Endothelial cell of umbilical vein (primary cell): ENCODE measurements at regions of chr14 and their contacts with region 1.

Region 1: GRCh38 chr14:31510222-31510621 is 22.4 kb upstream of the GPR33 start:
- DNase-seq: peak; percentile 38
- H3K4me3 ChIP-seq: no peak overlapping the region
- H3K27ac ChIP-seq: no peak overlapping the region
- H3K4me1 ChIP-seq: no peaks in the 10 kb centered on the region
- H3K27me3 ChIP-seq: peaks cover 1 to 2% of the 10 kb centered on the region in 2 experiments
- CTCF ChIP-seq: peak; percentile 13 to 22
- POLR2A ChIP-seq: no peak

Region 2: GRCh38 chr14:32259368-32260013 is 749.3 kb after region 1 on chr14:
- CTCF ChIA-PET with region 1: interaction called, 215 read pairs
- POLR2A ChIA-PET with region 1: no interaction called
- dilution Hi-C with region 1: no loop called
- intact Hi-C with region 1: loop called (anchors 1 kb)
- DNase-seq: peak; percentile 56
- H3K4me3 ChIP-seq: no peak overlapping the region
- H3K27ac ChIP-seq: no peak overlapping the region
- H3K4me1 ChIP-seq: peaks cover 8% of the 10 kb centered on the region
- H3K27me3 ChIP-seq: peaks cover 0 to 3% of the 10 kb centered on the region in 2 experiments
- CTCF ChIP-seq: no peak
- POLR2A ChIP-seq: no peak